HAP-1 (cell line): ENCODE measurements at regions of chr6 and their contacts with region 1.

Region 1: DNA sequence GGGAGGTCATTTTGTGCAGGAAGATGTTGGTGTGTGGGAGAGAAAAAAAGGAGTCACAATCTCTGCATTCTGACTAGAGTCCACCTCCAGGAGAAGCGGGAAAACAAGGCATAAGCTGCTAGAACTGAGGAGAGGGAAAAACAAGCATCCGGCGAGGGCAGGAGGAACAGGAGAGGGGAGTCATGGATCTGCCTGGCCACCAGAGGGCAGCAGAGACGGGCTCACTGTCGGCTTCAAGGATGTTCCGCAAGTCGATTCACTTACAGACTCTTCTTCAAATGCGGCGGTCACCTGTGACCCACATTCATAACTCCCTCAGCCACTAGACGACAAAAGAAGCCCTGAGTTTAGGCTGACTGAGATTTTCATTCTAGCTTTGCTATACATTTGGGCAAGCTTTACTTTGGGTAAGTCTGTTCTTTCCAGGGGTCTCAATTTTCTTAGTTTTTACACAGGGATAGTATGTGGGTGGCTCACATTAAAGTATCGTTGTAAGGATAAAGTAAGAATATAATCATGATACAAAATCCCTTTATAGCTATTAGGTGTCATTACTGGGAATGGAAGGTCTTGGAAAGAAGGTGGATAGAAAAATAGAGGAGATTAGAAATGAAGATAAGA is 6.6 kb upstream of the BTNL2 start:
- DNase-seq: peak; percentile 79 to 90
- H3K4me3 ChIP-seq: no peak overlapping the region
- H3K4me1 ChIP-seq: peaks cover 3% of the 10 kb centered on the region
- H3K27me3 ChIP-seq: peaks cover 5% of the 10 kb centered on the region

Region 2: GRCh38 chr6:31979238-31979898 is 434.2 kb before region 1 on chr6:
- in situ Hi-C with region 1: no loop called
- DNase-seq: no peak
- H3K4me3 ChIP-seq: no peak overlapping the region
- H3K4me1 ChIP-seq: no peaks in the 10 kb centered on the region
- H3K27me3 ChIP-seq: no peaks in the 10 kb centered on the region

Region 3: DNA sequence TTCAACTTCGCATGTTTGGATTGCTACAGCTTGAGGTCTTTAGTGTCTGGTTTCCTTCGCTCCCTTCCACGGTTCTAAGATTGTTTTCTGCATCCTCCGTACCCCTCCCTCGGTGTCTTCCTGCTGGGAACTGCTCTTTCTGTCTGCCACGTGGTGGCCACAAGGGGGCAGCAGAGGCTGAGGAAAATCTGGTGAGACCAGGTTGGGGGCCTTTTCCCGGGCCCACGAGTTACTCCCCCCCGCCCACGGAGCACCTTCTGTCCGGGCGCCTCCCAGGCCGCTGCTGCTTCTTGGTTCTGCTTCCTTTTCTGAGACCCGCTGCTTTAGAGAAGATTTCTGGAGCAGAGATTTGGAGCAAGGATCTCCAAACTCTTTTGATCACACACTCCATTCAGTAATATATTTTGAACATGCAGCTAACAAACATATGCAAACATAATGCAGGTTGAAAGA is 168.6 kb before region 1 on chr6:
- in situ Hi-C with region 1: loop called (anchors 5 kb)
- DNase-seq: peak; percentile 53 to 90
- H3K4me3 ChIP-seq: no peak overlapping the region
- H3K4me1 ChIP-seq: no peaks in the 10 kb centered on the region
- H3K27me3 ChIP-seq: no peaks in the 10 kb centered on the region

Region 4: GRCh38 chr6:32558426-32559057 is 145.0 kb after region 1 on chr6:
- in situ Hi-C with region 1: no loop called
- DNase-seq: no peak
- H3K4me3 ChIP-seq: no peak overlapping the region
- H3K4me1 ChIP-seq: no peaks in the 10 kb centered on the region
- H3K27me3 ChIP-seq: no peaks in the 10 kb centered on the region

Region 5: DNA sequence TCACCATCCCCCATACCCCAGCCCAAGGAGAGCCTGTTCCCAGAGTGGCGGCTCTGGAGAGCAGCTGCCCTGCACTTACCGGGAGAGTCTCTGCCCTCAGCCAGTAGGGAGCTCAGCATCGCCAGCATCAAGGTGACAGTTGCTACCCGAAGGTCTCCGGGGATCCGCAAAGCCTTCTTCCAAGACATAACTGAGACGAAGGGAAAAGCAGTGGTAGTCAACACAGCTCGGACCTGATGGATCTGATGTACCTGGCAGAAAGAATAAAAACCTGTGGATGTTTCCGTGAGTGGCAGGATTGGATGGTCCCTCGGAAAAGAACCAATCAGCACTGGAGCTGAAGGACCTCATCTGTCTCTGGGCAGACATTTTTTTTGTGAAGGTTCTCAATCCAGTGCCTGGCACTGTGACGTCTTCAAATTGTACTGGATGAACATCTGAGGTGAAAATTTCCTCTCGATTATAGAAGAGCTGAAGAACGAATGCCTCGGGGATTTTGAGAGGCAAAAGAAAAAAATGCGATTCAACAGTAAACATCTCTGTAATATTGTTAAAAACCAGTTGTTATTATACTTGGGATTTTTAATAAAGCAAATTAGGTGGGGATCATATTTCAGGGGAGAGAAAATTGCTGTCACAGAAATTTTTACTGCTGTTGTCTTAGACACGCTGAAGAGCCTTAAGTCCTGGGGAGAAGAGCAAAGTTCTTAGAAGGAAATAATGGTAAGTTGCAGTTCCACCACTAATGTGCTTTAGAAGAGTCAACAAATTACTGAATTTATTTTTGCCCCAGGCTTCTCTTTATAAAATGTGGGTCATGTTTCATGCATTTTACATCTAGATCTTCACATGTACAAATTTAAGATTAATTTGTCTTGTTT is 253.1 kb after region 1 on chr6 and contains the start of gene HLA-DQB1:
- in situ Hi-C with region 1: no loop called
- DNase-seq: peak; percentile 3 to 23
- H3K4me3 ChIP-seq: no peak within 1 kb of the TSS
- H3K4me1 ChIP-seq: no peaks in the 10 kb centered on the region
- H3K27me3 ChIP-seq: peaks cover 21% of the 10 kb centered on the region

Region 6: DNA sequence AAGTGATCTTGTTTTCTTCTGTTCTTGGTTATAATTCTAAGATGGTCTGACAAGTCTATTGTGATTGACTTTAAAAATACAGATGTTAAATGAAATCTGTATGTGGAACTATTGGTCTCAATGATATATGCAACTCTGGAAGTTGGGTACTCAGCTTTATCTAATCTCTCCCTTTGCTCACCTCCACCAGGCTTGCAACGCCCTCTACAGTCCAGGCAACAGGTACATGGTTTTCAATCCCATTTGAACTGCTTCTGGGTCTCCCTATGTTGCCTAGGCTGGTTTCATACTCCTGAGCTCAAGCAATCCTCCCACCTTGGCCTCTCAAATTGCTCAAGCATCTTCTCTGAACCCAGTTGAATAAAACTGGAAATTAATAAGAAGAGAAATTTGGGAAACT is 278.5 kb after region 1 on chr6:
- in situ Hi-C with region 1: loop called (anchors 10 kb)
- DNase-seq: peak; percentile 15 to 40
- H3K4me3 ChIP-seq: no peak overlapping the region
- H3K4me1 ChIP-seq: no peaks in the 10 kb centered on the region
- H3K27me3 ChIP-seq: peaks cover 5% of the 10 kb centered on the region; the same call in 1 of the 2 replicates

Region 7: DNA sequence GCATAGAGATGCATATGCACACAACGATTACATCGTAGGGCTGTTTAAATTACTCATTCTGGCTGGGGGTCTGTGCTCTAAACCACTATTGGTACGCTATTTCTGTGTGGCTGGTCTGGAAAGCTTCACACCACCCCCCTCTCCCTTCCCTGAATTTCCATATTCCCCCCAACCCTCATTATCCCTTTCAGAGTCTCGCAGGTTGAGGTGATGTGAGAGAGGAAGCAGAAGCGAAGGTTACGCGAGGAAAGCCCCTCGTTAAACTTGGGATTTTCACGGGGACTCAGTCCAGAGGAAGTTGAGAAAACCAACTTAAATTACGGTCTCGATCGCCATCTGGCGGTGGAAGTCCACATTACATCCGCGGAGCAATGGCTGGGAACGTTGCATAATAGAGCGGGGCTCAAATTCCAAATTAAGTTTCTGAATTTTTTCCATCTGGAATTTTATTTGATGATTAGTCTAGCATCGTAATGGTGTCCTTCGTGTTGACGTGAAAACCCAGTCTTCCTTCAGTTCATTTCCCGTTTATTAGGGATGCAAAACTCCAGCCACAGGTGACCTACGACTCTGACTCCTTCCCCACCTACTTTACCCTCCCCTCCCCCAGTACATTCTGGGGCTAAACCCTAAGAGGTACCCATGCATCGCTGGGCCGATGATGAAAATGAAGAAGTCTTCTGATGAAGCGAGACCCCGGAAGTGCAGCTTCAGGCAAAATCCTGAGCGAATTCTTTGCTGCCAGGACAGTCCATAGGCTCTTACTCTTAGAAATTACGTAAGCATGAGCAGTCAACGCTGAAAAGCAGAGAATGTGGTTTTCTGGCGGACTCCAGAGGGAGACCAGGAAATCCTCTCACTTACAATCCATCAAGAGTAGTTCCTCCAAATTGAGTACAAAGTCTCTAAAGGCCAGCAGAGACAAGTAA is 383.6 kb after region 1 on chr6:
- in situ Hi-C with region 1: loop called (anchors 5 kb)
- DNase-seq: peak; percentile 48 to 87
- H3K4me3 ChIP-seq: peak overlapping the region; percentile 8; the same call in 1 of the 2 replicates
- H3K4me1 ChIP-seq: 0 out of 2 replicates have a peak, but pooled peaks cover 3% of the 10 kb centered on the region
- H3K27me3 ChIP-seq: peaks cover 23% of the 10 kb centered on the region